ENCODE measurements at regions of chr2 and their contacts with region 1.

Region 1: DNA sequence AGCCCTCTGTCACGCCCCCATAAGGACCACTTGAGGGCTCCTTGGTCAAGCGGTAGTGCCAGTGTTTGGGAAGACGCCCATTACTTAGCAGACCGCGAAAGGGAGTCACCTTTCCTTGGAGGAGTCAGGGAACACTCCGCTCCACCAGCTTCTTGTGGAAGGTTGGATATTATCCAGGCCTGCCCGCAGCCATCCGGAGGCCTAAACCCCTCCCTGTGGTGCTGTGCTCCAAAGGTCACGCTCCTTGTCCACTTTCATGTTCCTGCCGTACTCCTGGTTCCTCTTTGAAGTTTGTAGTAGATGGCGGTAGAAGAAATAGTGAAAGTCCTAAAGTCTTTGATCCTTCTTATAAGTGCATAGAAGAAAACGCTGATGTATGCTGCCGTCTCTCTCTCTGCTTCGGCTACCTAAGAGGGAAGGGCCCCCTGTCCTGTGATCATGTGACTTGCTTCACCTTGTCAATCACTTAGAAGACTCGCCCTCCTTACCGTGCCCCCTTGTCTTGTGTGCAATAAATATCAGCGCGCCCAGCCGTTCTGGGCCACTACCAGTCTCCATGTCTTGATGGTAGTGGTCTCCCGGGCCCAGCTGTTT is 1.7 kb upstream of the CATIP start:
- DNase-seq: no peak
- H3K4me3 ChIP-seq: no peak overlapping the region
- H3K27ac ChIP-seq: no peak overlapping the region
- H3K4me1 ChIP-seq: peaks cover 0 to 13% (median 6%) of the 10 kb centered on the region in 4 experiments; a peak in 6 of 7 replicates
- H3K27me3 ChIP-seq: no peaks in the 10 kb centered on the region
- CTCF ChIP-seq: no peak
- EP300 ChIP-seq: no peak
- POLR2A ChIP-seq: no peak
- RAD21 ChIP-seq: no peak

Region 2: DNA sequence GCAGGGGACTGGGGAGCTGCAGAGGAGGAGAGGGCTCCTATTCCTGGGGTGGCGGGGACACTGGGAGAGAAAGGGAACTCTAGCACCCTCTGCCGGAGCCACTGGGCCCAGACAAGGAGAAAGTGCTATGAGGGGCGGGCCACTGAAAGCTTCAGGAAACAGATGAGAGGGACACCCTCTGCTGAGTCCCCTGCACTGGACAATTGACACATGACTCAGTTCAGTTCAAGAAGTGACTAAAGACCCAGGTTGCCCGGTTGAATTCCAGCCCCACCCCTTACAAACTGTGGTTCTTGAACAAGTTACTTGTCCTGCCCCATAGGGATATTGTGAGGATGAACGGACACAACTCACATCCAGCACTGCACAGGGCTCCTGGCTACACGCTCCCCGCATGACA is 280.9 kb before region 1 on chr2:
- CTCF ChIA-PET with region 1: no interaction called
- POLR2A ChIA-PET with region 1: no interaction called
- DNase-seq: peak; percentile 27 to 86
- H3K4me3 ChIP-seq: no peak overlapping the region
- H3K27ac ChIP-seq: no peak overlapping the region
- H3K4me1 ChIP-seq: peaks cover 0 to 7% (median under 1%) of the 10 kb centered on the region in 4 experiments; a peak in 3 of 7 replicates
- H3K27me3 ChIP-seq: no peaks in the 10 kb centered on the region; a peak in 1 of 7 replicates
- CTCF ChIP-seq: peak; percentile 67 to 79 (median 73)
- EP300 ChIP-seq: no peak
- POLR2A ChIP-seq: no peak
- RAD21 ChIP-seq: peak; percentile 46 to 62

Region 3: GRCh38 chr2:218312267-218312756 is 42.6 kb before region 1 on chr2:
- CTCF ChIA-PET with region 1: interaction called, 25 read pairs
- POLR2A ChIA-PET with region 1: no interaction called
- DNase-seq: no peak
- H3K4me3 ChIP-seq: no peak overlapping the region
- H3K27ac ChIP-seq: no peak overlapping the region
- H3K4me1 ChIP-seq: no peaks in the 10 kb centered on the region
- H3K27me3 ChIP-seq: no peaks in the 10 kb centered on the region
- CTCF ChIP-seq: no peak
- EP300 ChIP-seq: no peak
- POLR2A ChIP-seq: no peak
- RAD21 ChIP-seq: no peak